CD8-positive, alpha-beta memory T cell (primary cell): ENCODE measurements at regions of chr12 and their contacts with region 1.

Region 1: DNA sequence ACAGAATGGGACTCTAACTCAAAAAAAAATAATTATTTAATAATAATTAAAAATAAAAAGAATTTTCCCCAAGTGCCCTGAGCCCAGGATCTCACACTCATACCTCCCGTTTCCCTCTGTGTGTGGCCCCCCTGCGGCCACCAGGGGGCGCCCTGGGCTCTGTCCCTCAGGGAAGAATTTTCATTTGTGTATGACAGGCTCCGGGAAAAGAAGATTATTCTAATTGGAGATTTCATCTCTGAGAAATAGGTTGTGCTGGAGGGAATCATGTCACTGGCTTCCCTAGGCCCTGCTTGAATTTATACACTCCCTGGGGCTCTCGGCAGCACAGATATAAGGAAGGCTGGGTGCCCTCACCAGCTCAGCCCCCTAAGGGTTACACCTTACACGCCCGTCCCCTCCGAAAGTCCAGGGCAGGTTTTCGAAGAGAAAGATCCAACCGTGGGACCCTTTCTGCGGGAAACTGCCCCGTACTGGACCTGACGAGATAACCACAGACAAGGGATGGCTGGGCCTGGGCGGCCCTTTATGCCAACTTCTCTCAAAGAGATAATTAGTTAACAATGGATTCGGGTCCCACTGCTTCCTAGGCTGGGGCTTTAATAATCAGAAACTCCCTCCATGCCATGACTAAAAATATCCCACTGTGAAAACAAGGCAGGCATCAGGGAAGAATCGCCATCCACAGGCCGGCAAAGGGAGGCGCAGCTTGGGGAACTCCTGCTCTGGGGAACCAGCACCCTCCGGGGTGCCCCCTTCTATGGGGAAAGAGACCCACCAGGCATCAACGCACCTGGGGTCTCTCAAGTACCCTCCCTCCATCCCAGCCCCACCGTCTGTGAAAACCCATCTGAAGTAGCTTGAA is 80.7 kb downstream of the KDM2B start:
- DNase-seq: peak; percentile 61 to 81 (median 67)
- H3K4me3 ChIP-seq: no peak overlapping the region
- H3K4me3 Mint-ChIP-seq: no peak overlapping the region
- H3K27ac ChIP-seq: no peak overlapping the region
- H3K27ac Mint-ChIP-seq: peak overlapping the region in 4 of 8 donors; percentile 19 to 94 (median 73)
- H3K4me1 ChIP-seq: peaks cover 10% of the 10 kb centered on the region
- H3K4me1 Mint-ChIP-seq: peaks cover 28 to 55% (median 32%) of the 10 kb centered on the region in 3 donors
- H3K27me3 ChIP-seq: no peaks in the 10 kb centered on the region
- H3K27me3 Mint-ChIP-seq: no peaks in the 10 kb centered on the region

Region 2: DNA sequence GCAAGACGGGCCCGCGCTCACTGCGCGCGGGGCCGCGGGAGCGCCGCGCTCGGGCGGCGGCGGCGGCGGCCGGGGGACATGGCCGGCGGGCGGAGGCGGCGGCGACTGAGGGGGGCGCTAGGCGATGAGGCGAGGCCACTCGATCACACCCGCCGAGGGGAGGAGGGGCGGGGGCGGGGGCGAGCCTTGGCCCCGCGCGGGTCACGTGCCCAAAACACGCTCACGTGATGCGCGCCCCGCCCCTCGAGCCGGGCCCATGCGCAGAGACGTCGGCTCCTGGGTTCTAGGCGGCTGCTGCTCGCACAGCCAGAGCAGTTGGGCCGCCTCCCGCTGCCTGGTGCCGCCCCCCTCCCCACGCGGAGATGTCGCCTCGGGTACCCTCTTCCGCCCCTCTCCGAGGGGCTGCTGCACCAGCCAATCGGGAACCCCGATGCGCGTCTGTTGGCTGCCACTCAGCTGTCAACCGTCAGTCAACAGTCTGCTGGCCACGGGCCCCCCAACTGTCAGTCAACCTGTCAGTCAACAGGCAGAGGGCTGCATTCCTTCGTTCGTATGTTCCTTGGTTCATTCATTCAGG is 595.9 kb before region 1 on chr12 and contains the start of gene SPPL3:
- CTCF ChIA-PET with region 1: no interaction called
- POLR2A ChIA-PET with region 1: no interaction called
- DNase-seq: peak; percentile 83 to 92 (median 91)
- H3K4me3 ChIP-seq: peak within 1 kb of the TSS; percentile 68
- H3K4me3 Mint-ChIP-seq: peak within 1 kb of the TSS; percentile 99 to 100 (median 100)
- H3K27ac ChIP-seq: peak within 1 kb of the TSS; percentile 61
- H3K27ac Mint-ChIP-seq: peak within 1 kb of the TSS; percentile 90 to 99 (median 98)
- H3K4me1 ChIP-seq: peaks cover 19% of the 10 kb centered on the region
- H3K4me1 Mint-ChIP-seq: peaks cover 30 to 34% (median 32%) of the 10 kb centered on the region in 3 donors
- H3K27me3 ChIP-seq: no peaks in the 10 kb centered on the region
- H3K27me3 Mint-ChIP-seq: no peaks in the 10 kb centered on the region
- total RNA-seq, gene SPPL3: 34.9 to 35.6 TPM

Region 3: DNA sequence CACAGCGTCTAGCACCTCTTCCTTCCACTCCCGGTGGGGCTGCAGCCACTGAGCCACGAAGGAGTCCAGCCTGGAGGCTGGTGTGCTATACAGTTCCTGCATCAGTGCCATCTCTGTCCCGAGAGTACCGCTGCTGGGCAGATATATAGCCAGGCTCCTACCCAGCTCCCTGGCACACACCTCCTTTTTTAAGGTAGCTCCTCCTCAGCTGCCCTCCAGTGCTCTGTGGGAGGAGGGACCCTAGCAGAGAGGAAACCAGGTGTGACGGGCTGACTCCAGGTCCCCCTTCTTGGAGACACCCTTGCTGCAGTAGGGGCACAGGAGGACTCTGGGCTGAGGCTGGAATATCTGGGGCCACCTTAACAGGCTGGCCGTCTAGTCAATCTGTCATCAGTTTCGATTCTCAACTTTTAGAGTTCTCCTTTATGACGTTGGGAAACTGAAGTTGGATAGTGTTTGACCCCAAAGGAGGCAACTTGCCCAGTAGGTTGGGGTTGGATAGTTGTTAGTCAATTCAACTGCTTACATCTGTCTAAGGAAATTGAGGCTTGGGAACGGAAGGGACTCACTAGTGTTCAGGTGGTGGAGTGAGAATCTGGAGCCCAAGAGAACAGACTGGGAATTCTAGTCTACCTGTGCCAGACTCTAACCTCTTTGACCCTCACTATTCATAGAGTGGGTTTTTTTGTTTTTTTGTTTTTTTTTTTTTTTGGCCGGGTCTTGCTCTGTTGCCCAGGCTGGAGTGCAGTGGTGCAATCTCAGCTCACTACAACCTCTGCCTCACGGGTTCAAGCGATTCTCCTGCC is 461.1 kb before region 1 on chr12 and contains the start of gene OASL:
- CTCF ChIA-PET with region 1: no interaction called
- POLR2A ChIA-PET with region 1: no interaction called
- DNase-seq: peak; percentile 52 to 75 (median 61)
- H3K4me3 ChIP-seq: peak within 1 kb of the TSS; percentile 92
- H3K4me3 Mint-ChIP-seq: peak within 1 kb of the TSS; percentile 96 to 99 (median 98)
- H3K27ac ChIP-seq: peak within 1 kb of the TSS; percentile 75
- H3K27ac Mint-ChIP-seq: peak within 1 kb of the TSS; percentile 89 to 99 (median 98)
- H3K4me1 ChIP-seq: peaks cover 44% of the 10 kb centered on the region
- H3K4me1 Mint-ChIP-seq: peaks cover 40 to 47% (median 45%) of the 10 kb centered on the region in 3 donors
- H3K27me3 ChIP-seq: no peaks in the 10 kb centered on the region
- H3K27me3 Mint-ChIP-seq: peaks cover 0 to 3% of the 10 kb centered on the region in 2 donors
- total RNA-seq, gene OASL: 4.0 to 4.3 TPM

Region 4: GRCh38 chr12:121536899-121537813 is 37.0 kb after region 1 on chr12:
- CTCF ChIA-PET with region 1: interaction called, 10 read pairs
- POLR2A ChIA-PET with region 1: no interaction called
- DNase-seq: peak; percentile 47 to 73 (median 59)
- H3K4me3 ChIP-seq: peak overlapping the region; percentile 55
- H3K4me3 Mint-ChIP-seq: peak overlapping the region; percentile 75 to 92 (median 79)
- H3K27ac ChIP-seq: peak overlapping the region; percentile 62
- H3K27ac Mint-ChIP-seq: peak overlapping the region; percentile 84 to 99 (median 97)
- H3K4me1 ChIP-seq: peaks cover 42% of the 10 kb centered on the region
- H3K4me1 Mint-ChIP-seq: peaks cover 47 to 60% (median 50%) of the 10 kb centered on the region in 3 donors
- H3K27me3 ChIP-seq: no peaks in the 10 kb centered on the region
- H3K27me3 Mint-ChIP-seq: no peaks in the 10 kb centered on the region